ENCODE measurements at regions of chr7 and their contacts with region 1.

Region 1: DNA sequence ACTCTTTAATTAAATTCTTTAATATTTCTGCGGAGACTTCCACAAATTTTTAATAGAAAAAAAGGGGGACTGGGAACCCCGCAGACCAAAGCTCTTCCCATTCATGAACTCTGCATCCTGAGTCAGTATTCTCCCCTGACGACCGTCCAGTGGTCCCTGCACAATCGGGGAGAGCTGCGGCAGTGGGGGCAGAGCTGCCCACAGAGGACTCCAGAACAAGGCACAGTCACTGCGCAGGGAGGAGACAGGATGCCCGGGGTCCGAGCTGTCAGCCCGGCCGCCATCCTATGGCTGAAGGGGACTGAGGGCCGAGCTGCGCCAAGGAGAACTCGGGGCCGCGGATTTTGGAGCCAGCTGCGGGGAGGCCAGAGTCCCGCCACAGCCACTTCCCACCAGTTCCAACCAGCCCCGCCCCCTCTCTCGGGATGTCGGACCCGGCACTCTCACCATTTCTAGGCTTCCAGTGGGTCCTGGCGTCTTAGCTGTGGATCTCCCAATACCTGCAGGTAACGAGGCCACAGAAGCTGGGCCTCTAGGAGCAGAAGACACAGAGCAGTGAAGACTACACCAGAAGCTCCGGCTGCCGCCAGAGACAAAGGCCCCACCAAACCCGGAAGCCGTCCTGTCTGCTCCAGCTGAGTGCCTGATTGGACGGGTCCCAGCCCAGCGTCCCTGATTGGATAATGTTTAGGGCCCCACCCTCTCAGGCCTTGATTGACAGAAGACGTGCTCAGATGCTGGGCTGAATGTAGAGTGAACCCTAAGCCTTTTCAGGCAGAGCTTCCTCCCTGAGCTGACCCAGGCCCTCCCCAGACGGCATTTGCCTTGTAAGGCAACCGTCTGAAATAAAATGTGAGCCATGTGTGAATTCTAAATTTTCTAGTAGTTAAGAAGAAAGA is at the start of gene ERV3-1:
- DNase-seq: peak; percentile 99
- H3K4me3 ChIP-seq: peak within 1 kb of the TSS; percentile 67 to 86 (median 70)
- H3K27ac ChIP-seq: peak within 1 kb of the TSS; percentile 83 to 89 (median 84)
- H3K4me1 ChIP-seq: peaks cover 0 to 36% (median 31%) of the 10 kb centered on the region in 4 donors
- H3K27me3 ChIP-seq: no peaks in the 10 kb centered on the region
- CTCF ChIP-seq: no peak
- EP300 ChIP-seq: no peak
- POLR2A ChIP-seq: peak; percentile 97 to 98
- total RNA-seq, gene ERV3-1: 9.6 to 19.1 (median 14.7) TPM

Region 2: GRCh38 chr7:64887756-64888508 is 118.4 kb before region 1 on chr7:
- intact Hi-C with region 1: loop called (anchors 10 kb)
- DNase-seq: peak; percentile 63
- H3K4me3 ChIP-seq: peak overlapping the region in 3 of 4 donors; percentile 47 to 53 (median 51)
- H3K27ac ChIP-seq: no peak overlapping the region
- H3K4me1 ChIP-seq: peaks cover 0 to 57% (median 42%) of the 10 kb centered on the region in 4 donors
- H3K27me3 ChIP-seq: no peaks in the 10 kb centered on the region
- CTCF ChIP-seq: peak in 2 of 4 experiments; percentile 13 to 28
- EP300 ChIP-seq: no peak
- POLR2A ChIP-seq: no peak

Region 3: GRCh38 chr7:64945776-64946175 is 60.6 kb before region 1 on chr7:
- intact Hi-C with region 1: no loop called
- DNase-seq: no peak
- H3K4me3 ChIP-seq: no peak overlapping the region
- H3K27ac ChIP-seq: no peak overlapping the region
- H3K4me1 ChIP-seq: peaks cover 0 to 12% (median 11%) of the 10 kb centered on the region in 4 donors
- H3K27me3 ChIP-seq: peaks cover 10 to 39% (median 13%) of the 10 kb centered on the region in 3 donors
- CTCF ChIP-seq: no peak
- EP300 ChIP-seq: no peak
- POLR2A ChIP-seq: no peak